Activated CD8-positive, alpha-beta T cell treated with anti-CD3 and anti-CD28 coated beads for 36 hours (primary cell): ENCODE measurements at regions of chr19 and their contacts with region 1.

Region 1: DNA sequence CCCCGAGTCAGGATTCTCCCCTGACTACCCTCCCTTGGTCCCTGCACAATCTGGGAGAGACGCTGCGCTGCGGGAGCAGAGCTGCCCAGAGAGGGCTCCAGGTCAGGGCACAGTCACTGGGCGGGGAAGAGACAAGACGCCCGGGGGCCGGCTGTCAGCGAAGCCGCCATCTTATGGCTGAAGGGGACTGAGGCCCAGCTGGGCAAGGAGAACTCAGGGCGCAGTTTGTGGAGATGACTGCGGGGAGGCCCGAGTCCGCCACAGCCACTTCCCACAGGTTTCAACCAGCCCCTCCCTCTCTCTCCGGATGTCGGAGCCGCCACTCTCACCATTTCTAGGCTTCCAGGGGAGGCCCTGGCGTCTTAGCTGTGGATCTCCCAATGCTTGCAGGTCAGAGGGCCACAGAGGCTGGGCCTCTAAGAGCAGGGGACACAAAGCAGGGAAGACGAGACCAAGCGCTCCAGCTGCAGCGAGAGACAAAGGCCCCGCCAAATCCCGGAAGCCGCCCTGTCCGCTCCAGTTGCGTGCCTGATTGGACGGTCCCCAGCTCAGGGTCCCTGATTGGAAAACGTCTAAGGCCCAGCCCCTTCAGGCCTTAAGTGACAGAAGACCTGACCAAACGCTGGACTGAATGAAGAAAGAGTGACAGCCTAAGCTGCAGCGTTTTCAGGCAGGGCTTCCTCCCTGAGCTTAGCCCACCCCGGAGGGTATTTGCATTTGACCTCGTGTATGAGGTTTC is at the start of gene ZNF724:
- DNase-seq: peak; percentile 94
- ATAC-seq: peak; percentile 100
- H3K4me3 Mint-ChIP-seq: peak within 1 kb of the TSS; percentile 94
- H3K27ac Mint-ChIP-seq: peak within 1 kb of the TSS; percentile 95
- H3K4me1 Mint-ChIP-seq: peaks cover 13% of the 10 kb centered on the region
- H3K27me3 Mint-ChIP-seq: no peaks in the 10 kb centered on the region
- CTCF ChIP-seq: no peak
- total RNA-seq, gene ZNF724: 15.6 to 15.7 TPM

Region 2: DNA sequence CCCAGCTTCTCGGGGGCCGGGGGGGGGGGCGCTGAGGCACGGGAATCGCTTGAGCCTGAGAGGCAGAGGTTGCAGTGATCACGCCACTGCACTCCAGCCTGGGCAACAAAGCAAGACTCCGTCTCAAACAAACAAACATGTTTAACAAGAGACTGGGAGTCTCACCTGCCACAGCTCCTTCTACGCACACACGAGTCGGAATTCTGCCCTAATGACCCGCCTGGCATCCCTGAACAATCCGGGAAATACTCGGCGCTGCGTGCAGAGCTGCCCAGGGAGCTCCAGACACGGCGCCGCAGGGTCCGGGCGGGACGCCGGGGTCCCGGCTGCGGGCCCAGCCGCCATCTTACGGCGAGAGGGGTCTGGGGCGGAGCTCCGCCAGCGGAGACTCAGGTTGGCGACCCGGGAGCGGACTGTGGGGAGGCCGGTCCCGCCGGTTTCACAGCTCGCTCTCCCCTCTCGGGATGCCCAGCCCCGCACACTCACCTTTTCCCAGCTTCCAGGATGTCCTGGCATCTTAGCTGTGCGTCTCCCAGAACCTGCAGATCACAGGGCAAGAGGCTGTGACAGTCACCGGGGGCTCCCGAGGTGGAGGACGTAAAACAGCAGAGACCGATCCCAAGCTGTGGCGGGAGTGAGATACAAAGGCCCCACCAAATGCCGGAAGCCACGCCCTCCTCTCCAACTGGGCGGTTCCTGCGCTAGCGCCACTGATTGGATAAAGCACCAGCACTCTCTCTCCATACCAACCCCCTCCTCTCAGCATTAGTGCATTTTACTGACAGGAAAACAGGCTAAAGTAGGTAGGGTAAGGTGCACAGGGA is 23.7 kb after region 1 on chr19:
- CTCF ChIA-PET with region 1: interaction called, 4 read pairs
- POLR2A ChIA-PET with region 1: interaction called, 16 read pairs
- intact Hi-C with region 1: no loop called
- DNase-seq: peak; percentile 97
- ATAC-seq: peak; percentile 99
- H3K4me3 Mint-ChIP-seq: peak overlapping the region; percentile 91
- H3K27ac Mint-ChIP-seq: peak overlapping the region; percentile 92
- H3K4me1 Mint-ChIP-seq: peaks cover 23% of the 10 kb centered on the region
- H3K27me3 Mint-ChIP-seq: no peaks in the 10 kb centered on the region
- CTCF ChIP-seq: no peak